ENCODE measurements at regions of chr18 and their contacts with region 1.

Region 1: GRCh38 chr18:11937874-11938478 is 29.9 kb upstream of the MPPE1 start:
- DNase-seq: peak; percentile 82
- ATAC-seq: peak; percentile 64
- H3K4me3 ChIP-seq: no peak overlapping the region
- H3K4me3 Mint-ChIP-seq: no peak overlapping the region
- H3K27ac ChIP-seq: no peak overlapping the region
- H3K27ac Mint-ChIP-seq: no peak overlapping the region
- H3K4me1 ChIP-seq: no peaks in the 10 kb centered on the region
- H3K4me1 Mint-ChIP-seq: no peaks in the 10 kb centered on the region
- H3K27me3 ChIP-seq: no peaks in the 10 kb centered on the region
- H3K27me3 Mint-ChIP-seq: no peaks in the 10 kb centered on the region
- CTCF ChIP-seq: peak; percentile 86

Region 2: GRCh38 chr18:11851146-11851805 is 86.7 kb before region 1 on chr18 and contains the start of gene CHMP1B:
- CTCF ChIA-PET with region 1: interaction called, 20 read pairs
- POLR2A ChIA-PET with region 1: no interaction called
- intact Hi-C with region 1: no loop called
- DNase-seq: peak; percentile 98
- ATAC-seq: peak; percentile 94
- H3K4me3 ChIP-seq: peak within 1 kb of the TSS; percentile 85 to 100 (median 98)
- H3K4me3 Mint-ChIP-seq: peak within 1 kb of the TSS; percentile 100
- H3K27ac ChIP-seq: peak within 1 kb of the TSS; percentile 93 to 97
- H3K27ac Mint-ChIP-seq: peak within 1 kb of the TSS; percentile 99
- H3K4me1 ChIP-seq: peaks cover 28 to 31% of the 10 kb centered on the region in 2 donors
- H3K4me1 Mint-ChIP-seq: peaks cover 34% of the 10 kb centered on the region
- H3K27me3 ChIP-seq: no peaks in the 10 kb centered on the region
- H3K27me3 Mint-ChIP-seq: no peaks in the 10 kb centered on the region
- CTCF ChIP-seq: no peak
- total RNA-seq, gene CHMP1B: 52.2 and 55.4 TPM in 2 replicates

Region 3: GRCh38 chr18:11980555-11981382 is 42.8 kb after region 1 on chr18:
- CTCF ChIA-PET with region 1: interaction called, 32 read pairs
- POLR2A ChIA-PET with region 1: no interaction called
- intact Hi-C with region 1: loop called (anchors 1 kb)
- DNase-seq: peak; percentile 97
- ATAC-seq: peak; percentile 87
- H3K4me3 ChIP-seq: peak overlapping the region; percentile 44 to 81 (median 68)
- H3K4me3 Mint-ChIP-seq: peak overlapping the region; percentile 90
- H3K27ac ChIP-seq: peak overlapping the region in 1 of 2 donors; percentile 23
- H3K27ac Mint-ChIP-seq: peak overlapping the region; percentile 86
- H3K4me1 ChIP-seq: peaks cover 5 to 15% of the 10 kb centered on the region in 2 donors
- H3K4me1 Mint-ChIP-seq: peaks cover 14% of the 10 kb centered on the region
- H3K27me3 ChIP-seq: no peaks in the 10 kb centered on the region
- H3K27me3 Mint-ChIP-seq: no peaks in the 10 kb centered on the region
- CTCF ChIP-seq: no peak

Region 4: DNA sequence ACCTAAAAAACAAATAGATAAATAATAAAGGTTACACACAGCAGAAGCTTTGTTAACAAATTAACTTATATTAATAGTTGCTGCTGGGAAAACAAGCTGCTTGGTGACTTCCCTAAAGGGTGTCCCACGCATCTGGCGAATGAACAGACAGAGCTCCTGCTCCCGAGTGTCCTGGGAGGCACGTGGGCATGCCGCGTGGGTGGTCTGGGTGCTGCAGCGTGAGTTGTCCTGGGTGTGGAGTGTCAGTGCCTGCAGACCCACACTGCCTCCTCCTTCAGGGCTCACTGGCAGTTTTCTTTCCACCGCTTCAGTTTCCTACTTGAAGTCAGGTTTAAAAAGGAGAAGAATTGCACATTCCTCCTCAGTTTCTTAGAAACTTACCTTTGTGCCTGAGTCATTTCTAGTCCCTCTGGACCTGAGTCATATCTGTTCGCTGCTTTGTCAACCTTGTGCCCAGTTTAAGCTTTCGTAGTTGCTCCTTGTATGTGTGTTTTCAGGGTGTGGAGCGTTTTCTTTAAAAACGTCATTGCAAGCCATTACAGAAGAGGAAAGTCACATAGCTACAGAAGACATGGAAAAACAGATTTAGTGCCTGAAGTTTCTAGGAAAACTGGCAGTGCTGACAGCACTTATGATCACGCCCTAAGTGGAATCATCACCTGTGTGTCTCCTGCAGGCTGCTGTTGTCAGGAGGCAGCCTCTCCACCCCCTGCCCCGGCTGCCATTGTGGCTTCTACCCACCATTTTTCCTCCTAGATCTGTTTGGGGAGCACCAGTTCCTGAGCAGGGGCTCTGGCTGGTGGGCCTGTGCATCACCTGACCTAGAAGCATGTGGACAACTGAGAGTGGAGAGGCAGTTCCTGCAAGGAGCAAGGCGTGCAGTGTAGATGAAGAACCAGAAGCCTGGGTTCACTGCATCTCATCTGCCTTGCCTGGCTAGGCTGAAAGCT is 67.8 kb after region 1 on chr18:
- CTCF ChIA-PET with region 1: interaction called, 390 read pairs
- POLR2A ChIA-PET with region 1: no interaction called
- intact Hi-C with region 1: no loop called
- DNase-seq: no peak
- ATAC-seq: no peak
- H3K4me3 ChIP-seq: no peak overlapping the region
- H3K4me3 Mint-ChIP-seq: no peak overlapping the region
- H3K27ac ChIP-seq: no peak overlapping the region
- H3K27ac Mint-ChIP-seq: no peak overlapping the region
- H3K4me1 ChIP-seq: no peaks in the 10 kb centered on the region
- H3K4me1 Mint-ChIP-seq: peaks cover 9% of the 10 kb centered on the region
- H3K27me3 ChIP-seq: no peaks in the 10 kb centered on the region
- H3K27me3 Mint-ChIP-seq: no peaks in the 10 kb centered on the region
- CTCF ChIP-seq: no peak

Region 5: GRCh38 chr18:12049978-12050811 is 112.2 kb after region 1 on chr18:
- CTCF ChIA-PET with region 1: interaction called, 17 read pairs
- POLR2A ChIA-PET with region 1: interaction called, 7 read pairs
- intact Hi-C with region 1: no loop called
- DNase-seq: peak; percentile 75
- ATAC-seq: peak; percentile 89
- H3K4me3 ChIP-seq: peak overlapping the region in 3 of 5 experiments; percentile 21 to 47 (median 26)
- H3K4me3 Mint-ChIP-seq: peak overlapping the region; percentile 75
- H3K27ac ChIP-seq: peak overlapping the region; percentile 12 to 41
- H3K27ac Mint-ChIP-seq: peak overlapping the region; percentile 76
- H3K4me1 ChIP-seq: peaks cover 36 to 49% of the 10 kb centered on the region in 2 donors
- H3K4me1 Mint-ChIP-seq: peaks cover 52% of the 10 kb centered on the region
- H3K27me3 ChIP-seq: no peaks in the 10 kb centered on the region
- H3K27me3 Mint-ChIP-seq: no peaks in the 10 kb centered on the region
- CTCF ChIP-seq: no peak